Activated naive CD4-positive, alpha-beta T cell treated with anti-CD3 and anti-CD28 coated beads, Interleukin-2, amount 10 ng/mL, durations not matched to agents 7 days and 5 days (primary cell): ENCODE measurements at regions of chr12 and their contacts with region 1.

Region 1: GRCh38 chr12:54411391-54412241 is 7.5 kb downstream of the ITGA5 start:
- DNase-seq: peak; percentile 80
- H3K4me3 Mint-ChIP-seq: peak overlapping the region; percentile 74
- H3K27ac Mint-ChIP-seq: peak overlapping the region; percentile 92
- H3K4me1 Mint-ChIP-seq: peaks cover 66% of the 10 kb centered on the region
- H3K27me3 Mint-ChIP-seq: no peaks in the 10 kb centered on the region

Region 2: GRCh38 chr12:54207484-54208294 is 203.9 kb before region 1 on chr12:
- CTCF ChIA-PET with region 1: no interaction called
- DNase-seq: peak; percentile 87
- H3K4me3 Mint-ChIP-seq: no peak overlapping the region
- H3K27ac Mint-ChIP-seq: no peak overlapping the region
- H3K4me1 Mint-ChIP-seq: peaks cover 4% of the 10 kb centered on the region
- H3K27me3 Mint-ChIP-seq: peaks cover 82% of the 10 kb centered on the region

Region 3: DNA sequence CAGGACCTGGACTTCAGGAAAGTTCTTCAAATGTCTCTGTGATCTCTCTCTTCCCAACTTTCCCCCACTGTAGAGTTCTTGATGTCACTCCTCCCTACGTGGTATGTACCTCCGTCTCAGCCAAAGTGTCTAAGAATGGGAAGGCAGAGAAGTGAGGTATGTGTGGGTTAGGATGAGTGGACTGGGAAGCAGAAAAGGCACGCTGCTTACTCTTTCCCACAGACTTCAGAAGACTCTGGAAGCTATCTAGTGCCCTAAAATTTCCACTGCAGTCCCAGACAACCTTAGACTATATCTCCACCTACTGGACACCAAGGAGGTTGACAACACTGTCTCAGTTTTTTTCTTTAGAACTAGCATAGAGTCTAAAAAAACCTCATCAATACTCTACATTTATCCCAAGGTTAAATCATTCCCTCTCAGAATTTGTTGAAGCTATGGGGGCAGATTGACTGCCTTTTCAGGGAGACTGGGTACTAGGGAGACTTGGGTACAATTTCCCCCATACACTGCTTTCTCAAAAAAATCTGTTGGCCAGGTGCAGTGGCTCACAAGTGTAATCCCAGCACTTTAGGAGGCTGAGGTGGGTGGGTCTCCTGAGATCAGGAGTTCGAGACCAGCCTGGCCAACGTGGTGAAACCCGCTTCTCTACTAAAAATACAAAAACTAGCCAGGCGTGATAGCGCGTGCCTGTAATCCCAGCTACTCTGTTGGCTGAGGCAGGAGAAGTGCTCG is 28.1 kb after region 1 on chr12:
- CTCF ChIA-PET with region 1: interaction called, 519 read pairs
- DNase-seq: no peak
- H3K4me3 Mint-ChIP-seq: no peak overlapping the region
- H3K27ac Mint-ChIP-seq: peak overlapping the region; percentile 28
- H3K4me1 Mint-ChIP-seq: peaks cover 8% of the 10 kb centered on the region
- H3K27me3 Mint-ChIP-seq: peaks cover 28% of the 10 kb centered on the region